ENCODE measurements at regions of chr5 and their contacts with region 1.

Region 1: DNA sequence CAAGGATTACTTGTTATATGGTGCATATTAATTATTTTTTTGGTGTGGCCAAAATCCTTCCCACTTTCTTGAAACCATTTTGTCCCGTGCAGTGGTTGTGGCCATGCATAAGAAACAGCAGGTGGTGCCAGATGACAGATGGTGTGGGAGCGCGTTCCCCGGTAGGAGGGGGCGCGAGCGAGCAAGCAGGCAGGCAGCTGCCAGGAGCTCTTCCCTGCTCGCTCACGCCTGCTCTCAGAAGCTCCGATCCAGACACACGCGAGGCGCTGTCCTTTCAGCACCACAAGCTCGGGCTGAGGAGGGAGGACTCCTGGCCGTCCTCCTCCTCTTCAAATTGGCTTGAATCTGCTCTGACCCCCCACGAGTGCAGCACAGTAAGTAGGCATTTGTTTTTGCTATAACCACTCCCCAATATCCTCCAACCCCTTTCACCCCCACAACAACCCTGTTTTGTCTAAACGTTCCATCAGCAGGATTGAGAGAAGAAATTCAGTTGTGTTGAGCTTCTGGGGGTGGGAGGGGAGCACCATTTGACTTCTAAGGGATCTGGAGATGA is at the start of gene NSG2:
- DNase-seq: peak; percentile 95
- ATAC-seq: peak; percentile 100
- H3K4me3 ChIP-seq: no peak within 1 kb of the TSS
- H3K27ac ChIP-seq: no peak within 1 kb of the TSS
- H3K4me1 ChIP-seq: no peaks in the 10 kb centered on the region
- H3K27me3 ChIP-seq: peaks cover 18% of the 10 kb centered on the region; the same call in 1 of the 2 replicates
- CTCF ChIP-seq: peak; percentile 97
- total RNA-seq, gene NSG2: 0.07 TPM in 1 of 2 replicates, not detected in the other

Region 2: GRCh38 chr5:173686950-173687349 is 358.6 kb before region 1 on chr5:
- CTCF ChIA-PET with region 1: no interaction called
- POLR2A ChIA-PET with region 1: interaction called, 20 read pairs
- intact Hi-C with region 1: no loop called
- DNase-seq: no peak
- ATAC-seq: no peak
- H3K4me3 ChIP-seq: no peak overlapping the region
- H3K27ac ChIP-seq: no peak overlapping the region
- H3K4me1 ChIP-seq: no peaks in the 10 kb centered on the region
- H3K27me3 ChIP-seq: no peaks in the 10 kb centered on the region
- CTCF ChIP-seq: no peak

Region 3: GRCh38 chr5:173984218-173984617 is 61.3 kb before region 1 on chr5:
- CTCF ChIA-PET with region 1: no interaction called
- POLR2A ChIA-PET with region 1: no interaction called
- intact Hi-C with region 1: loop called (anchors 2 kb)
- DNase-seq: peak; percentile 76
- ATAC-seq: peak; percentile 97
- H3K4me3 ChIP-seq: no peak overlapping the region
- H3K27ac ChIP-seq: no peak overlapping the region
- H3K4me1 ChIP-seq: no peaks in the 10 kb centered on the region
- H3K27me3 ChIP-seq: no peaks in the 10 kb centered on the region
- CTCF ChIP-seq: peak; percentile 94

Region 4: GRCh38 chr5:174020397-174021296 is 24.9 kb before region 1 on chr5:
- CTCF ChIA-PET with region 1: no interaction called
- POLR2A ChIA-PET with region 1: no interaction called
- intact Hi-C with region 1: no loop called
- DNase-seq: peak; percentile 93
- ATAC-seq: peak; percentile 99
- H3K4me3 ChIP-seq: peak overlapping the region; percentile 44
- H3K27ac ChIP-seq: no peak overlapping the region
- H3K4me1 ChIP-seq: no peaks in the 10 kb centered on the region
- H3K27me3 ChIP-seq: peaks cover 34% of the 10 kb centered on the region
- CTCF ChIP-seq: peak; percentile 88

Region 5: GRCh38 chr5:174140452-174141020 is 95.0 kb after region 1 on chr5:
- CTCF ChIA-PET with region 1: interaction called, 11 read pairs
- POLR2A ChIA-PET with region 1: no interaction called
- intact Hi-C with region 1: no loop called
- DNase-seq: no peak
- ATAC-seq: no peak
- H3K4me3 ChIP-seq: no peak overlapping the region
- H3K27ac ChIP-seq: no peak overlapping the region
- H3K4me1 ChIP-seq: no peaks in the 10 kb centered on the region
- H3K27me3 ChIP-seq: peaks cover 91% of the 10 kb centered on the region
- CTCF ChIP-seq: no peak

Region 6: DNA sequence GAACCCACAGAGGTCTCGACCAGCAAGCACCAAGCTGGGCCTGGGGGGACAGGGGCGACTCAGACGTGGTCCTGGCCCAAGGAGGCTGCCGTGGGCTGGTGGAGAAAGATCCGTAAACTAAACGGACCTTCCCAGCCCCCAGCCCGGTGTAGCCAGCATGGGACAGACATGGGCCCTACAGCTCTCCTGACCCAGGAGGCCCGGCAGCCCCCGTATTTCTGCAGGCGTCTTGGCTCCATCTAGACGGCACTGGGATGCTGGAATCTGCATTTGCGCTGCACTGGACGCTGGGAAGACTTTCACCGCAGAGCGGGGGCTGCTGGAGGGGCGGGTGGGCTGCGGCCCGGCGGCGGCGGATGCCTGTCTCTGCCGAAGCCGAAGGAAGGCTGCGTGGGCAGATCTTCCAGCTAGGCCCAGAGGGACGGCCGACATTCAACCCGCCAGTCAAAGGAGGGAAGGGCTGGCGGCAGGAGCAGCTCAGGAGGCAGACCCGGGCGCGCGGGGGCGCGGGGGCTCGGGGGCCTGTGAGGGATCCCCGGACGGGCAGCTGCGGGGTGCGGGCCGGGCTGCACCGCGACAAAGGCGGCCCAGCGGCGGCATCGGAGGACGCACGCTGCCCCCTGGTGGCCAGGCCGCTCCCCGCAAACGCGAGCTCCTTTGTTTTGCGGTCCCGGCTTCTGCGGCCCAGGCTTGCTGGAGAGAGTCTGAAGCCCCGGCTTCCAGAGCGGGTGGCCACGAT is 266.2 kb after region 1 on chr5:
- CTCF ChIA-PET with region 1: interaction called, 39 read pairs
- POLR2A ChIA-PET with region 1: no interaction called
- intact Hi-C with region 1: loop called (anchors 1 kb)
- DNase-seq: peak; percentile 68
- ATAC-seq: peak; percentile 88
- H3K4me3 ChIP-seq: peak overlapping the region; percentile 67
- H3K27ac ChIP-seq: no peak overlapping the region
- H3K4me1 ChIP-seq: no peaks in the 10 kb centered on the region; the same call in 1 of the 2 replicates
- H3K27me3 ChIP-seq: peaks cover 80% of the 10 kb centered on the region
- CTCF ChIP-seq: peak; percentile 88

Region 7: DNA sequence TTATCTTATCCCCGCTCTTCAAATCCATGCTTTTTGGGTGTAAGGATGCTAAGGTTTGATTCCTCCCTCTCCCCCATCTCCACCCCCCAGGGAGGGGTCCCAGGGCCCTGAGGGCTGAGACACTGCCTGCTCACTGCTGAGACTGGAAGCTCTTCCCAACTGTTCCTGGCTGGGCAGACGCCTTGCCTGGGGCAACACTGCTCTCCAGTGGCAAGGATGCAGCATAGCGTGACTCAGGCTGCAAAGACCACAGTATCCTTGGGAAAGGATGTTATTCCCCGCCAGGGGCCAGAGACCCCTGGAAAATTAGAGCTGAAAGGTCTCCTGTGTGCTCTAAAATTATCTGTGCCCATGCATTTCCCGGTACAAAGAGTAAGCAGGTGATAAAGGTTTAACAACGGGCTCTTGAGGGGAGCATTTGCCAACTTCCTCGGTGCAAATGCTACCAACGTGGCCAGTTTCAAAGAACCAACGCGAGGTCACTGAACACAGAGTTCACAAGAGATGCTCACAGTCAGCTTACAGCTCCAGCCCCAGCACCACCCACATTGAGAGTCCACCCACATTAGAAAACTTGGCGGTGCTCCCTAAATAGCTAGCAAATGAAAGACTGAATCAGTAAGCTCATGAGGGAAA is 271.8 kb after region 1 on chr5:
- CTCF ChIA-PET with region 1: interaction called, 39 read pairs
- POLR2A ChIA-PET with region 1: no interaction called
- intact Hi-C with region 1: loop called (anchors 1 kb)
- DNase-seq: peak; percentile 80
- ATAC-seq: peak; percentile 94
- H3K4me3 ChIP-seq: no peak overlapping the region
- H3K27ac ChIP-seq: no peak overlapping the region
- H3K4me1 ChIP-seq: no peaks in the 10 kb centered on the region
- H3K27me3 ChIP-seq: peaks cover 51% of the 10 kb centered on the region
- CTCF ChIP-seq: peak; percentile 97